Left cardiac atrium (tissue), 4 donors: ENCODE measurements at regions of chr1 and their contacts with region 1.

Region 1: DNA sequence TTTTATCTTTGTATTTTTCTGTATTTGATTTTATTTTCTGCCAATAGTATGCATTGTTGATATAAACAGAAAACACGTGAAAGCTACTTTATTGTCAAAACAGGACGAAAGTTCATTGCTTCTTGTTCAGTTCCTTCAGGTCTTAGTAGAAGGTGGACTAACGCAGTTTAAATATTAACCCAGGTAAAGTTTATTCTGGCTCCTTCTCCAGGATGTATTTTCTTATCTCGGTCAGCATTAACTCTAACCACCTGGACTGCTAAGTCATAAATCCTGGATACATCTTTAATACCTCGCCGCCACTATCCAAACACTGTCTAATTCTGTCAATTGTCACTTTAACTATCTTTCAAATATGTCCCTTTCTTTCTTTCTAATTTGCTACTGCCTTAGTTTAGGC is 5.7 kb upstream of the SOAT1 start:
- DNase-seq: no peak
- ATAC-seq: no peak

Region 2: DNA sequence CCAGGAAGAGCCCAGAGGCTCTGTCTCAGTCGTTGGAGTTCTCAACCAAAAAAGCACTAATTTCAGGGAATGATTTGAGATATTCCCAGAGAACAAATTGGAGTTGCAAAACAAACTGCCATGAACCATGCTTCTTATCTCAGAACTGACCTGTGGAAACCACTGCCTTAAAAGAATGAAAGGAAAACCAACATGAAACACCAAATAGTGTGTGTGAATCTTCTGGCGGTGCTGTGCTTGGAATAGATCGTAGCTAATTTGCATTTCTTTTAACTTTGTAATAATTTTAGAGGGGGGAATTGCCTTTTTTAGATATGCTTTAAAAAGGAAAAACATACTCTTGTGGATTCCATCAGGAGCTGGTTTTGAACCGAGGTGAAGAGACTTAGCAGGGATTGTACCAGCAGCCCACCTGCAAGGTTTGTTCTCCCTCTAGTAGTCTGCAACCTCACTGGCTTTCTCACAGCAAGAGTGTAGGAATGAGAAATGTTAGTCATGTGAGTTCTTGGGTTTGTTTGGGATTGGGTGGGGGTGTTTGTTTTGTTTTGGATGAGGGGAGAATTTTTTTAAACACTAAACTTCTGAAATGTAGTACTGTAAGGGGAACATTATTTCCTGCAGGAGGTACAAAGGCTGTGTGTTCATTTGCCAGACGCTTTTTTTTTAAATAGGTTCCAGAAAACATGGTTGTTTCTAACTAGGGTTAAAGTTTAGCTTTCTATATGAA is 371.3 kb before region 1 on chr1:
- intact Hi-C with region 1: no loop called
- DNase-seq: no peak
- ATAC-seq: no peak

Region 3: GRCh38 chr1:179187043-179187442 is 100.9 kb before region 1 on chr1:
- intact Hi-C with region 1: no loop called
- DNase-seq: no peak
- ATAC-seq: no peak

Region 4: GRCh38 chr1:179229214-179230140 is 58.5 kb before region 1 on chr1 and contains the start of gene ABL2:
- intact Hi-C with region 1: loop called in 1 of 2 experiments (anchors 10 kb)
- DNase-seq: peak; percentile 47
- ATAC-seq: peak; percentile 90
- total RNA-seq, gene ABL2: 10.7 to 13.9 TPM